ENCODE measurements at regions of chr16 and their contacts with region 1.

Region 1: GRCh38 chr16:78122774-78123315 is 23.4 kb downstream of the WWOX start:
- DNase-seq: peak; percentile 48 to 78
- H3K4me3 ChIP-seq: no peak overlapping the region
- H3K4me1 ChIP-seq: no peaks in the 10 kb centered on the region; the same call in 1 of the 2 replicates
- H3K27me3 ChIP-seq: no peaks in the 10 kb centered on the region

Region 2: DNA sequence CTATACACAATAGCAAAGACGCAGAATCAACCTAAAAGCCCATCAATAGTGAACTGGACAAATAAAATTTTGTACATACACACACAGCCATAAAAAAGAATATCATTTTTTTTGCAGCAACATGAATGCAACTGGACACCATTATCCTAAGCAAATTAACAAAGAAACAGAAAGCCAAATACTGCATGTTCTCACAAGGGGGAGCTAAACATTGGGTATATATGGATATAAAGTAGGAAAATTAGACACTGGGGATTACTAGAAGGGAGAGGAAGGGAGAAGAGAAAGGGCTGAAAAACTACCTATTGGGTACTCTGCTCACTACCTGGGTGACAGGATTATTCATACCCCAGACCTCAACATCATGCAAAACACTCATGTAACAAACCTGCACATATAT is 716.2 kb before region 1 on chr16:
- in situ Hi-C with region 1: no loop called
- DNase-seq: no peak
- H3K4me3 ChIP-seq: no peak overlapping the region
- H3K4me1 ChIP-seq: no peaks in the 10 kb centered on the region
- H3K27me3 ChIP-seq: no peaks in the 10 kb centered on the region

Region 3: GRCh38 chr16:78235168-78235800 is 112.4 kb after region 1 on chr16:
- in situ Hi-C with region 1: loop called (anchors 10 kb)
- DNase-seq: peak; percentile 40 to 80
- H3K4me3 ChIP-seq: no peak overlapping the region
- H3K4me1 ChIP-seq: no peaks in the 10 kb centered on the region
- H3K27me3 ChIP-seq: no peaks in the 10 kb centered on the region